ENCODE measurements at regions of chr4 and their contacts with region 1.

Region 1: DNA sequence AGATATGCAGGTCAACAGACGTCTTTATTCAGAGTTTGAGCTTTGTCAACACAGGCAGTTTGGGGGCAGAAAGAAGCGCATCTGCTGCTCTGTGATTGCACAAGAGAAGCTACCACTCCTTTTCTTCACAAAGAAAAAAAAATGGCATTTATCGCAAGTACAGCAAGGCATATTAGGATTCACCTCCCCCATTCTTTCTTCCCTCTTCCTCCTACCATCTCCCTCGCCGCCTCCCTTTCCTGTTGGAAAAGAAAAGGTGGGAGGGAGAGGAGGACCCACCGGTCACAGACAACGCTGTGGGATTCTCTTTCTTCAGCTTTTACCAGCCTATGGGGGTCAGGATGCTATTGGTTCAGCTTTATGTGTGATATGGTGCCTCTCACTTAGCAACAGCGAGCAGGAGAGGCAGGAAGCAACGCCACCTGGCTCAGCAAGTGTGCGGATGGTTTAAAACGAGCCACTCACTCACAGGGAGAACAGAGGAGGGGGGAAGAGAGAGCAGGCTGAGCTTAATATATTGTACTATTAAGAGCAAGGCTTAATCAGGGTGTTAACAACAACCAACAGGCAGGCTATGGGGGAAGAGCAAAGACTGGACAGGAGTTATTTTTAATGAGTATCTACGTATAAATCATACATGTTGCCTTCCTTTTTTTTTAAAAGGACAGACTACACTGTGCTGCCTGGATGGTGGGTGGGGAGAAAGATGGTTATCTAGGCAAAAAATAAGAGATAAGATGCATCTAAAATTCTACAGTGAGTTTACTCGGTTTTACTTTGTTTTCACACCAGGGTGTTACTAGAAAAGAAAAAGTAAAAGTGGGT is 104.7 kb downstream of the MAML3 start:
- DNase-seq: peak; percentile 78
- H3K4me3 Mint-ChIP-seq: peak overlapping the region; percentile 78
- H3K27ac Mint-ChIP-seq: peak overlapping the region; percentile 14
- H3K4me1 Mint-ChIP-seq: peaks cover 31% of the 10 kb centered on the region
- H3K27me3 Mint-ChIP-seq: peaks cover 2% of the 10 kb centered on the region

Region 2: GRCh38 chr4:139603576-139604387 is 445.5 kb before region 1 on chr4:
- CTCF ChIA-PET with region 1: no interaction called
- intact Hi-C with region 1: loop called (anchors 1 kb)
- DNase-seq: peak; percentile 55
- H3K4me3 Mint-ChIP-seq: no peak overlapping the region
- H3K27ac Mint-ChIP-seq: no peak overlapping the region
- H3K4me1 Mint-ChIP-seq: peaks cover 15% of the 10 kb centered on the region
- H3K27me3 Mint-ChIP-seq: peaks cover 12% of the 10 kb centered on the region

Region 3: GRCh38 chr4:139901531-139902320 is 147.5 kb before region 1 on chr4:
- CTCF ChIA-PET with region 1: no interaction called
- intact Hi-C with region 1: loop called (anchors 5 kb)
- DNase-seq: no peak
- H3K4me3 Mint-ChIP-seq: no peak overlapping the region
- H3K27ac Mint-ChIP-seq: no peak overlapping the region
- H3K4me1 Mint-ChIP-seq: peaks cover 14% of the 10 kb centered on the region
- H3K27me3 Mint-ChIP-seq: peaks cover 2% of the 10 kb centered on the region

Region 4: DNA sequence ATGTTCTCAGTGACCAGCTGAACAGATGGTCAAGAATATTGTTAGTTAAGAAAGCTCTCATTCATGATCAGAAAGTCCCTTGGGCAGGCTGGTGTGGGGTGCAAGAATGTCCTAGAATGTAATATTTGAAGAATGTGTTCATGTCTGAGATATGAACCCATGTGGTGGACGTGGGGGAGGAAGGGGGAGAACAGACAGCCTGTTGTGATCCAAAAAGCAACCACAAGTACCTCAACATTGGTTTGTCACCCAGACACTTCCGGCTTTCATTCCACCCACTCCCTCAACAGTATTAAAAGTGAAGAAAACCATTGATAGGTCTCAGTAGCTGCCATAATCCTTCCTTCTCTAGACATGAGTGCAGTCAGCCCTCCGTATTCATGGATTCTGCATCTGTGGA is 22.6 kb after region 1 on chr4:
- CTCF ChIA-PET with region 1: interaction called, 3 read pairs
- intact Hi-C with region 1: loop called (anchors 2 kb)
- DNase-seq: peak; percentile 89
- H3K4me3 Mint-ChIP-seq: peak overlapping the region; percentile 46
- H3K27ac Mint-ChIP-seq: peak overlapping the region; percentile 39
- H3K4me1 Mint-ChIP-seq: peaks cover 41% of the 10 kb centered on the region
- H3K27me3 Mint-ChIP-seq: no peaks in the 10 kb centered on the region

Region 5: GRCh38 chr4:140103676-140104075 is 54.4 kb after region 1 on chr4:
- CTCF ChIA-PET with region 1: interaction called, 7 read pairs
- intact Hi-C with region 1: loop called (anchors 1 kb)
- DNase-seq: peak; percentile 64
- H3K4me3 Mint-ChIP-seq: no peak overlapping the region
- H3K27ac Mint-ChIP-seq: no peak overlapping the region
- H3K4me1 Mint-ChIP-seq: peaks cover 48% of the 10 kb centered on the region
- H3K27me3 Mint-ChIP-seq: peaks cover 2% of the 10 kb centered on the region